ENCODE measurements at regions of chr3 and their contacts with region 1.

Region 1: GRCh38 chr3:148754837-148755236 is 57.1 kb downstream of the AGTR1 start:
- DNase-seq: no peak
- H3K4me3 Mint-ChIP-seq: no peak overlapping the region
- H3K27ac Mint-ChIP-seq: no peak overlapping the region
- H3K4me1 Mint-ChIP-seq: peaks cover 18% of the 10 kb centered on the region
- H3K27me3 Mint-ChIP-seq: no peaks in the 10 kb centered on the region
- CTCF ChIP-seq: no peak

Region 2: GRCh38 chr3:148400754-148401153 is 354.1 kb before region 1 on chr3:
- CTCF ChIA-PET with region 1: no interaction called
- intact Hi-C with region 1: no loop called
- DNase-seq: no peak
- H3K4me3 Mint-ChIP-seq: no peak overlapping the region
- H3K27ac Mint-ChIP-seq: no peak overlapping the region
- H3K4me1 Mint-ChIP-seq: no peaks in the 10 kb centered on the region
- H3K27me3 Mint-ChIP-seq: no peaks in the 10 kb centered on the region
- CTCF ChIP-seq: no peak

Region 3: DNA sequence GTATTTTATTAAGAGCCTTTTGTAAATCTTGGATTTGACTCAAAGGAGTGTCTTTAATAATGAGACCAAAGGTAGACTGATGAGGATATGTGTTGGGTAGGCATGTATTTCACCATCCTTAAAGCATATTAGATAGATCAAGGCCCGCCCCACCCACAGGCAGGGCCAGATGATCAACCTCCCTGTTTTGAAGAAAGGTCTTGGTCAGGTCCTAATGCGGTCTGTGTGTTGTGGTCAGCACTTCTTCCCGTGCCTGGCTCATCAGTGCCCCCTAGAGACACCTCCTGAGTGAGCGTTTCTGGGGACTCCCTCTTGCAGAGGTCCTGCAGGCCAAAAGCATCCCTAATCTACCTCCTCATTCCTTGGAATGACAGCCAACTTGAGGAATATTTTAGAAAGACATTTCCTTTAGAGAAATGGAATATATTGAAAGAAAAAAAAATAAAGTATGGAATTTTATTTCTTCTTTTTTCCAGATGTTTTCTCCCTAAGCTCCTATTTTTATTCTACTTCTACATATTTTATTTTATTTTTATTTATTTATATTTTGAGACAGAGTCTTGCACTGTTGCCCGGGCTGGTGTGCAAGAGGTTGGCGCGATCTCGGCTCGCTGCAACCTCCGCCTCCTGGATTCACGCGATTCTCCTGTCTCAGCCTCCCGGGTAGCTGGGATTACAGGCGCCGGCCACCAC is 725.6 kb after region 1 on chr3:
- CTCF ChIA-PET with region 1: no interaction called
- intact Hi-C with region 1: no loop called
- DNase-seq: peak; percentile 97
- H3K4me3 Mint-ChIP-seq: peak overlapping the region; percentile 6
- H3K27ac Mint-ChIP-seq: peak overlapping the region; percentile 99
- H3K4me1 Mint-ChIP-seq: peaks cover 64% of the 10 kb centered on the region
- H3K27me3 Mint-ChIP-seq: no peaks in the 10 kb centered on the region
- CTCF ChIP-seq: peak; percentile 96

Region 4: DNA sequence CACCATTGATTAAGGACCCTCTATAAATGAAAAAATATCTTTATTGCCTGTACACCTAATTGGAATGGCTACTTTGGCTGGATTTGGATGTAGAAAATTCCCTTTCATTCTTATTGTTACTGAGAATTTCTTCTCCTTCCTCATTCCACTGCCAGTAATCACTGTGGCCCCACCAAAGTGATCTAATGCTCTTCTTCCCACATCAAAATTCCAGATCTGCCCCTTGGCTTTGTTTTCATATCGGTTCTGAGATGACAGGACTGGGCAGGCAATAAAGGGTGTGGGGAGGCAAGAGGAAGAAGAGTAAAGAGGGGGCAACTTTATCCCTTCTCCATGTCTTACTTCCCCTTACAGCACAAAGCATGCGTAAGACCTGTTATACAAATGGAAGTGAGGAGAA is 1035.4 kb after region 1 on chr3:
- CTCF ChIA-PET with region 1: no interaction called
- intact Hi-C with region 1: loop called (anchors 5 kb)
- DNase-seq: peak; percentile 38
- H3K4me3 Mint-ChIP-seq: no peak overlapping the region
- H3K27ac Mint-ChIP-seq: peak overlapping the region; percentile 21
- H3K4me1 Mint-ChIP-seq: peaks cover 17% of the 10 kb centered on the region
- H3K27me3 Mint-ChIP-seq: no peaks in the 10 kb centered on the region
- CTCF ChIP-seq: no peak